ENCODE measurements at regions of chr4 and their contacts with region 1.

Region 1: DNA sequence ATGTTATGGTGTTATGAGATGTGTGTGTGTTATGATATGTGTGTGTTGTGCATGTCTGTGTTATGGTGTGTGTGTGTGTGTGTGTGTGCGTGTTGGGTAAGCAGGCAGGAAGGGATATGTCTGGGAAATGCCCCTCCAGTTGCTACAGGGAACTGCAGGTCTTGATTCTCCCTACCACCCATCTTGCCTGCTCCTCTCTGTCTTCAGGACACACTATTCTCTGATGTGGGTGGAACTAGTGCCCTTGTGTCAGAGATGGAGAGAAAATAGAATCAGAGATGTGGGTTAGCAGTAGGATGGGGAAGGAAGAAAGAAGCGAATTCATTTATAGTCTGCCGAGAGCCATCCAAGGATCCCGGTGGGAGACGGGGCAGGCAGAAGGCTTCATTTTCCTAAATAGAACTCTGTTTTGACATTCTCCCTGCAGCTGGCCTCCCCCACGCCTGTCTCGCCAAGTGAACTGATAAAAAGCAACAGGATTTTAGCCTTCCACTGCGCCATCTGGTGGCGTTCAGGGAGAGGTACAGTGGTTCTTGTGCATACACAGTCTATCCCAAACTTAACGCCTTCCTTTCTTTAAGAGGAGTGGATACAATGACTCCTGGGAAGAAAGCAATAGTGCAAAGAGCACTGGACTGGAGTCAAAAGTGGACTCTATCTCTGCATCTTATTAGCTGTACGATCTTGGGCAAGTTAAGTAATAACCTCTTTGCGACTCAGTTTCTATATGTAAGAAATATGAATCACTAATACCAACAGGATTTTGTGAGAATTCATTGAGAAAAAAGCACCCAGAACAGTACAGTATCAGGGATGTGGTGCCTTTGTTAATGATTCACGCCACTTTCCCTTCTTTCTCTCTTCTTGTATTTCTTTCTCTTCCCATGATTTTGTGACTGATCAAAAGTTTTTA is 14.1 kb upstream of the MGST2 start:
- DNase-seq: peak; percentile 32 to 69 (median 57)
- ATAC-seq: peak; percentile 91
- H3K4me3 ChIP-seq: no peak overlapping the region
- H3K4me3 Mint-ChIP-seq: peak overlapping the region in 6 of 10 donors; percentile 0 to 46 (median 26)
- H3K27ac ChIP-seq: no peak overlapping the region
- H3K27ac Mint-ChIP-seq: peak overlapping the region in 1 of 9 donors; percentile 56
- H3K4me1 ChIP-seq: no peaks in the 10 kb centered on the region
- H3K4me1 Mint-ChIP-seq: peaks cover 0 to 13% (median 5%) of the 10 kb centered on the region in 7 donors
- H3K27me3 ChIP-seq: no peaks in the 10 kb centered on the region
- H3K27me3 Mint-ChIP-seq: peaks cover 0 to 9% (median 5%) of the 10 kb centered on the region in 5 donors

Region 2: DNA sequence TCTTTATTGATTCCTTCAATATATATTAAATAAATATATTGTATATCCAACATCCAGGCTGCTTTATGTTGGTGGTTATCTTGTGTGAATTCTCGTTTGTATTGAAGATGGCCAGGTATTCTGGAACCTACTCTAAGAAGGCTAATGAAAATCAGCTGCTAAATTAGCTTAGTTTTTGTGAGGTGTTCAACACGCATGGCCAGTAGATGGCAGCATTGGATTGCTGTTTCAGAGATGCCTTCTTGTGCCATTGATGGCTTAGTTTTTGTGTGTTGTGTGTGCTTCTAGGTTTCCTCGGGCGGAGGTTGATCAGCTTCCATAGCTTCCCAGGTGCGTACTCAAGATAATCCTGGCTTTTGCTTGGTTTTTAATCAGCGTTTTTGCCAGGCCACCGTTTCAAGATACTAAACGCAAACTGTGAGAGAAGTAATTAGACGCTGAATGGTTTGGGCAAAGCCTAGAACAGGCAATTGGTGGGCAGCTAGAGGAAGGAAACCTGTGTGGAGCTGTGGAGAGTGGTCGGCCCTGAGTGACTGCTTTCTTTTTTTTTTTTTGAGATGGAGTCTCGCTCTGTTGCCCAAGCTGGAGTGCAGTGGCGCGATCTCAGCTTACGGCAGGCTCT is 620.8 kb before region 1 on chr4:
- CTCF ChIA-PET with region 1: interaction called, 9 read pairs
- POLR2A ChIA-PET with region 1: no interaction called
- intact Hi-C with region 1: loop called in 1 of 2 experiments (anchors 1 kb)
- DNase-seq: peak; percentile 45 to 81 (median 74)
- ATAC-seq: peak; percentile 86
- H3K4me3 ChIP-seq: no peak overlapping the region
- H3K4me3 Mint-ChIP-seq: peak overlapping the region in 5 of 10 donors; percentile 3 to 58 (median 18)
- H3K27ac ChIP-seq: no peak overlapping the region
- H3K27ac Mint-ChIP-seq: peak overlapping the region in 2 of 9 donors; percentile 0 to 1
- H3K4me1 ChIP-seq: no peaks in the 10 kb centered on the region
- H3K4me1 Mint-ChIP-seq: peaks cover 5 to 20% (median 11%) of the 10 kb centered on the region in 7 donors
- H3K27me3 ChIP-seq: no peaks in the 10 kb centered on the region
- H3K27me3 Mint-ChIP-seq: no peaks in the 10 kb centered on the region

Region 3: GRCh38 chr4:139229534-139230039 is 422.0 kb before region 1 on chr4:
- CTCF ChIA-PET with region 1: no interaction called
- POLR2A ChIA-PET with region 1: no interaction called
- intact Hi-C with region 1: loop called in 1 of 2 experiments (anchors 1 kb)
- DNase-seq: peak in 7 of 9 donors; percentile 11 to 58 (median 37)
- ATAC-seq: peak; percentile 84
- H3K4me3 ChIP-seq: no peak overlapping the region
- H3K4me3 Mint-ChIP-seq: no peak overlapping the region
- H3K27ac ChIP-seq: no peak overlapping the region
- H3K27ac Mint-ChIP-seq: no peak overlapping the region
- H3K4me1 ChIP-seq: no peaks in the 10 kb centered on the region
- H3K4me1 Mint-ChIP-seq: peaks cover 0 to 7% (median 4%) of the 10 kb centered on the region in 7 donors
- H3K27me3 ChIP-seq: no peaks in the 10 kb centered on the region
- H3K27me3 Mint-ChIP-seq: no peaks in the 10 kb centered on the region

Region 4: DNA sequence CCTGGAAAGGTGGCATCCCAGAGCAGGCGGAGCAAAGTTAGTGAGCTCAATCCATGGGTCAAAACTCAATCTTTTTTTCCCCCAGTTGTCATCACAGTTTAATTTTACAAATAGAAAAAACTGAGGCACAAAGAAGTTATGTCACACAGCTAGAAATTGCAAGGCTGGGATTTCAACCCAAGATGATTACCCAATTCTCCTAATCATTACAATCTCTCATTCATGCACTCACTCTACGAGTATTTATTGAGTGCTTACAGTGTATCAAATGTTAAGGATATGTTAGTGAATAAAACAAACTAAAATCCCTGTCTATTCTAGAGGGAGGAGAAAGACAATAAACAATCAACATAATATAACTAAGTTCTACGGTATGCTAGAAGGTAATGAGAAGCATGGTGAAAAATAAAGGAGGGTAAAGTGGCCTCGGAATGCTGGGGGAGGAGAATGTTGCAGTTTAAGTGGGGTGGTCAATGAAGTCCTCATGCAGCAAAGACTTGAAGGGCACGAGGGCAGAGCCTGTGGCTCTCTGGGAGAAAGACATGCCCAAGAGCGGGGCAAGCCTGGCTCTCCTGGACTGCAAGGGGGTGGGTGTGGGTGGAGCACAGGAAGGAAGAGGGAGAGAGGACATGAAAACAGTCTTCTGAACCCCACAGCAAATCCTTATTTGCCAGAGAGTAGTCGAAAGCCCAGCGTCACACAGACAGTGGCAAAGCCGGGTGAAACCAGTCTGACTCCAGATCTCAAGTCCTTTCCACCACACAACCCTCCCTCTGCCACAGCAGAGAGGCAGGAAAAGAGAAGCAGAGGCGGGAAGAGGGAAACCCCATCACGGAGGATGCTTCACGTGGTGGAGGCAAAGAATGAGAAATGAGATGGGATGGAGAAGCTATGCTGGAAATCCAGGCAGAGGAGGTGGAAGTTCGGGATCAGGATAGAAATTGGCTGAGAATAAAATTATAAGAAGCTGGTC is 149.3 kb before region 1 on chr4:
- CTCF ChIA-PET with region 1: interaction called, 5 read pairs
- POLR2A ChIA-PET with region 1: no interaction called
- intact Hi-C with region 1: loop called in 1 of 2 experiments (anchors 2 kb)
- DNase-seq: no peak
- ATAC-seq: no peak
- H3K4me3 ChIP-seq: no peak overlapping the region
- H3K4me3 Mint-ChIP-seq: no peak overlapping the region
- H3K27ac ChIP-seq: no peak overlapping the region
- H3K27ac Mint-ChIP-seq: no peak overlapping the region
- H3K4me1 ChIP-seq: no peaks in the 10 kb centered on the region
- H3K4me1 Mint-ChIP-seq: peaks cover 0 to 7% (median 0%) of the 10 kb centered on the region in 7 donors
- H3K27me3 ChIP-seq: no peaks in the 10 kb centered on the region
- H3K27me3 Mint-ChIP-seq: peaks cover 0 to 7% (median 5%) of the 10 kb centered on the region in 5 donors

Region 5: GRCh38 chr4:139603576-139604387 is 47.8 kb before region 1 on chr4:
- CTCF ChIA-PET with region 1: interaction called, 23 read pairs
- POLR2A ChIA-PET with region 1: no interaction called
- intact Hi-C with region 1: loop called (anchors 1 kb)
- DNase-seq: peak in 7 of 9 donors; percentile 5 to 46 (median 33)
- ATAC-seq: peak; percentile 54
- H3K4me3 ChIP-seq: no peak overlapping the region
- H3K4me3 Mint-ChIP-seq: no peak overlapping the region
- H3K27ac ChIP-seq: no peak overlapping the region
- H3K27ac Mint-ChIP-seq: no peak overlapping the region
- H3K4me1 ChIP-seq: no peaks in the 10 kb centered on the region
- H3K4me1 Mint-ChIP-seq: peaks cover 13 to 23% (median 17%) of the 10 kb centered on the region in 7 donors
- H3K27me3 ChIP-seq: no peaks in the 10 kb centered on the region
- H3K27me3 Mint-ChIP-seq: peaks cover 10 to 21% (median 14%) of the 10 kb centered on the region in 5 donors

Region 6: GRCh38 chr4:140296335-140297220 is 645.0 kb after region 1 on chr4:
- CTCF ChIA-PET with region 1: no interaction called
- POLR2A ChIA-PET with region 1: no interaction called
- intact Hi-C with region 1: no loop called
- DNase-seq: no peak
- ATAC-seq: no peak
- H3K4me3 ChIP-seq: no peak overlapping the region
- H3K4me3 Mint-ChIP-seq: no peak overlapping the region
- H3K27ac ChIP-seq: no peak overlapping the region
- H3K27ac Mint-ChIP-seq: no peak overlapping the region
- H3K4me1 ChIP-seq: no peaks in the 10 kb centered on the region
- H3K4me1 Mint-ChIP-seq: peaks cover 0 to 5% (median 0%) of the 10 kb centered on the region in 7 donors
- H3K27me3 ChIP-seq: no peaks in the 10 kb centered on the region
- H3K27me3 Mint-ChIP-seq: peaks cover 0 to 17% (median 0%) of the 10 kb centered on the region in 5 donors

Region 7: GRCh38 chr4:140308366-140309123 is 657.0 kb after region 1 on chr4:
- CTCF ChIA-PET with region 1: no interaction called
- POLR2A ChIA-PET with region 1: no interaction called
- intact Hi-C with region 1: no loop called
- DNase-seq: no peak
- ATAC-seq: no peak
- H3K4me3 ChIP-seq: no peak overlapping the region
- H3K4me3 Mint-ChIP-seq: no peak overlapping the region
- H3K27ac ChIP-seq: no peak overlapping the region
- H3K27ac Mint-ChIP-seq: no peak overlapping the region
- H3K4me1 ChIP-seq: no peaks in the 10 kb centered on the region
- H3K4me1 Mint-ChIP-seq: peaks cover 0 to 5% (median 0%) of the 10 kb centered on the region in 7 donors
- H3K27me3 ChIP-seq: no peaks in the 10 kb centered on the region
- H3K27me3 Mint-ChIP-seq: peaks cover 0 to 33% (median 4%) of the 10 kb centered on the region in 5 donors

Region 8: GRCh38 chr4:140609548-140610425 is 958.2 kb after region 1 on chr4:
- CTCF ChIA-PET with region 1: no interaction called
- POLR2A ChIA-PET with region 1: no interaction called
- intact Hi-C with region 1: loop called in 1 of 2 experiments (anchors 10 kb)
- DNase-seq: peak in 5 of 9 donors; percentile 21 to 49 (median 25)
- ATAC-seq: peak; percentile 73
- H3K4me3 ChIP-seq: no peak overlapping the region
- H3K4me3 Mint-ChIP-seq: no peak overlapping the region
- H3K27ac ChIP-seq: no peak overlapping the region
- H3K27ac Mint-ChIP-seq: no peak overlapping the region
- H3K4me1 ChIP-seq: no peaks in the 10 kb centered on the region
- H3K4me1 Mint-ChIP-seq: peaks cover 0 to 2% (median 0%) of the 10 kb centered on the region in 7 donors
- H3K27me3 ChIP-seq: no peaks in the 10 kb centered on the region
- H3K27me3 Mint-ChIP-seq: peaks cover 0 to 7% (median 0%) of the 10 kb centered on the region in 5 donors